ENCODE measurements at regions of chr3 and their contacts with region 1.

Region 1: DNA sequence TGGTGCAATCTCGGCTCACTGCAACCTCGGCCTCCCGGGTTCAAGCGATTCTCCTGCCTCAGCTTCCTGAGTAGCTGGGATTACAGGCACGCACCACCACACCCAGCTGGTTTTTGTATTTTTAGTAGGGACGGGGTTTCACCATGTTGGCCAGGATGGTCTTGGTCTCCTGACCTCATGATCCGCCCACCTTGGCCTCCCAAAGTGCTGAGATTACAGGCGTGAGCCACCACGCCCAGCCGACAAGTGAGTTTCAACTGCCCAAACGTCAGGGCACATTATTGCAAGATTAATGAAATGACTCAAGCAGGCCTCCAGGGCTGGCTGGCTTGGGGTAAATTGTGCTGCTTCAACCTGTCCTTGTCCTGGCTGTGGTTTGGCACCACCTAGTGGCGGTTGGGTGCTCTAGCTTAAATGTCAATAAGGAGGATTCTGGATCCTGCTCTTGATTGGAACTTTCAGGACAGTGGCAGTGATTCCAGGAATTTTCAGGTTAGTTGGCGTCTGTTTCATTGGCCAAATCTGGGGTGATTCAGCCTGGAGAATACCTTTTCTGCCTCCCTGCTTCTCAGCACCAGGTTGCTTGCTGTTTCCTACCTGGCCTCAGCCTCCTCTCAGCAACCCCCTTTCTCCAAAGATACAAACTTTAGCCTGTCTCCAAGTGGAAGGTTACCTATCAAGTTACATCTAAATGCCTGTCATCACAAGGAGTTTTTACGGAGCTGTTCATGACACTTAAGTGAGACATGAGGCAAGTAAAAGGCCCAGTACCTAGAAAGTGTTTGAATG is 32.4 kb upstream of the SACM1L start:
- DNase-seq: peak; percentile 94
- H3K4me3 Mint-ChIP-seq: no peak overlapping the region
- H3K27ac Mint-ChIP-seq: no peak overlapping the region
- H3K4me1 Mint-ChIP-seq: peaks cover 13% of the 10 kb centered on the region
- H3K27me3 Mint-ChIP-seq: no peaks in the 10 kb centered on the region

Region 2: GRCh38 chr3:45426161-45426560 is 230.6 kb before region 1 on chr3:
- intact Hi-C with region 1: no loop called
- DNase-seq: peak; percentile 47
- H3K4me3 Mint-ChIP-seq: no peak overlapping the region
- H3K27ac Mint-ChIP-seq: no peak overlapping the region
- H3K4me1 Mint-ChIP-seq: no peaks in the 10 kb centered on the region
- H3K27me3 Mint-ChIP-seq: no peaks in the 10 kb centered on the region

Region 3: GRCh38 chr3:45593708-45594609 is 62.8 kb before region 1 on chr3:
- intact Hi-C with region 1: loop called (anchors 2 kb)
- DNase-seq: peak; percentile 94
- H3K4me3 Mint-ChIP-seq: peak overlapping the region; percentile 83
- H3K27ac Mint-ChIP-seq: peak overlapping the region; percentile 90
- H3K4me1 Mint-ChIP-seq: peaks cover 48% of the 10 kb centered on the region
- H3K27me3 Mint-ChIP-seq: peaks cover 3% of the 10 kb centered on the region